GM12878 (cell line): ENCODE measurements at regions of chr12 and their contacts with region 1.

Region 1: DNA sequence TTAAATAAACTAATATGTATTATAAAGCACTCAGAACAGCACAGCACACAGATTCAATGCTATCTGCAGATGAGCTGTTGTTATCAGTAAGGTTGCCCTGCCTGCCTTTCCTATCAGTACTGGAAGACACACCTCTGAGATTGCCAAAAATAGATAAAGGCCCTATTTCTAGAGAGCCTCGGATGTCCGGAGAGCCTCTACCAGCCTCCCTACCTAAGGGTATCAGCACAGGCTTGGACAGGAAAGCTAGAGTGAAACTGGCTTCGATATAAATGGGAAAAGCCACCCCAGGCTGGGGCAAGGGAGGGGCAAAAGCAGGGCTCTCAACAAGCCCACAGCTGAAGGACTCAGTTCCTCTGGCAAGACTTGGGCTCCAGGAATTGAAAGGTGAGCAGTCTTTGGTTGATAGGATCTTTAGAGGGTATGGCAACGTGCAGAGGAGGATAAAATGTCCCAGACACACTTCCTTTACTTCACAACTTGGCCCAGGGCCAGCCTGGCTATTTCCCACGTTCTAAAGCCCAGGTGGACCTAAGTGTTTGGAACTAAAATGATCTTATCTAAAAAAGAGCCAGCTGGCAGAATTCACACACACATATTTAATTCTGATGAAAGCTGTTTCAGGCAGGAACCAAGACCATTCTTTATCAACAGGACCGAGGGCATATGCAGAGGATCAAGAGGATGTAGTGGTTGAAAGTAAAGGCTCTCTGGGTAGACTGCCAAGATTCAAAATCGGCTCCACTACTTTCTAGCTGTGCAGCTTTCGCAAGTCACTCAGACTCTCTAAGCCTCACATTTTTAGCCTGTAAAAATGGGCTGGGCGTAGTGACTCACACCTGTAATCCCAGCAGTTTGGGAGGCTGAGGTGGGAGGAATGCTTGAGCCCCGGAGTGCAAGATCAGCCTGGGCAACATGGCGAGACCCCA is 37.8 kb upstream of the ITPR2 start:
- DNase-seq: peak; percentile 35
- ATAC-seq: peak; percentile 33
- H3K4me3 ChIP-seq: no peak overlapping the region
- H3K27ac ChIP-seq: no peak overlapping the region; the same call in 1 of the 2 replicates
- H3K4me1 ChIP-seq: peaks cover 48% of the 10 kb centered on the region
- H3K27me3 ChIP-seq: no peaks in the 10 kb centered on the region
- CTCF ChIP-seq: no peak
- EP300 ChIP-seq: no peak
- POLR2A ChIP-seq: no peak
- RAD21 ChIP-seq: no peak

Region 2: DNA sequence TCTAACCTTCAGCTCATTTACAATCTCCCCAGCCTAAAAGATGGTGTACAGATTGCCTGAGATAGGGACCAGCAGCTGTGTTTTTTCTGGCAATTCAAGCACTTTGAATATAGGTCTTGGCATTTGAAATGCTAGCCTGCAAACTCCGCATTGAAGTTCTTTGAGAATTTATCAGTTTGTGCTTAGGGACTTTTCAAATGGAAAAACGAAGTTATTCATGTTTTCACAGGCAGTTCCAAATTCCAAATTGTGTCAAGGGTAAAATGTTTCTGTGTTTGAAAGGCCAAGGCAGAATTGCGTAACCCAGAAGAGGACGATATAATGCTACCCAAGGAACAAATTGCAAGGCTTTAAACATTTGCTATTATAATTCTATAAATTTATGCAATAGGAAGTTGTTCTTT is 1081.2 kb before region 1 on chr12:
- CTCF ChIA-PET with region 1: no interaction called
- POLR2A ChIA-PET with region 1: no interaction called
- RAD21 ChIA-PET with region 1: no interaction called
- SMC1A ChIA-PET with region 1: no interaction called
- in situ Hi-C with region 1: no loop called
- intact Hi-C with region 1: no loop called
- DNase-seq: no peak
- ATAC-seq: no peak
- H3K4me3 ChIP-seq: no peak overlapping the region
- H3K27ac ChIP-seq: no peak overlapping the region
- H3K4me1 ChIP-seq: no peaks in the 10 kb centered on the region
- H3K27me3 ChIP-seq: no peaks in the 10 kb centered on the region
- CTCF ChIP-seq: no peak
- EP300 ChIP-seq: no peak
- POLR2A ChIP-seq: no peak
- RAD21 ChIP-seq: no peak

Region 3: DNA sequence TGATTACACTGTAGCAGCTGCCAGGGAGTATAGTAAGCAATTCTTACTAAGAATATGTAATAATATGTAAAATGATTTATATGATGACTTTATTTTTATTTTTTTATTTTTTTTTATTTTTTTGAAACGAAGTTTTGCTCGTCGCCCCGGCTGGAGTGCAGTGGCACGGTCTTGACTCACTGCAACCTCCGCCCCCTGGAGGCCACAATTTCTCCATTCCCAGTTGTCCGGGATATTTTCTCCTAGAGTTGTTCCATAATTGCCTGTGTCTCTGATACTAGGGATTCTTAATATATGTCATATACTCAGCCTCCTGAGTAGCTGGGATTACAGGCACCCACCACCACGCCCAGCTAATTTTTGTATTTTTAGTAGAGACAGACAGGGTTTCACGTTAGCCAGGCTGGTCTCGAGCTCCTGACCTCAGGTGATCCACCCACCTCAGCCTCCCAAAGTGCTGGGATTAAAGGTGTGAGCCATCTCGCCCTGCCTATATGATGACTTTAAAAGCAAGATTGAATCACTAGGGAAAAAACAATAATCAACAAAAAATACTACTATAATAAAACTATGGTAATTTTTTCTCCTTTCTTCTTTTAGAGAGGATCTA is 25.6 kb before region 1 on chr12:
- CTCF ChIA-PET with region 1: interaction called, 10 read pairs
- POLR2A ChIA-PET with region 1: no interaction called
- RAD21 ChIA-PET with region 1: interaction called, 9 read pairs
- SMC1A ChIA-PET with region 1: interaction called, 14 read pairs
- in situ Hi-C with region 1: no loop called
- intact Hi-C with region 1: no loop called
- DNase-seq: no peak
- ATAC-seq: peak; percentile 43; the same call in 2 of the 3 replicates
- H3K4me3 ChIP-seq: no peak overlapping the region
- H3K27ac ChIP-seq: no peak overlapping the region
- H3K4me1 ChIP-seq: peaks cover 10% of the 10 kb centered on the region
- H3K27me3 ChIP-seq: no peaks in the 10 kb centered on the region
- CTCF ChIP-seq: peak; percentile 38 to 59 (median 56)
- EP300 ChIP-seq: no peak
- POLR2A ChIP-seq: no peak
- RAD21 ChIP-seq: peak; percentile 58

Region 4: GRCh38 chr12:26896913-26897312 is 26.2 kb after region 1 on chr12:
- CTCF ChIA-PET with region 1: no interaction called
- POLR2A ChIA-PET with region 1: no interaction called
- RAD21 ChIA-PET with region 1: no interaction called
- SMC1A ChIA-PET with region 1: no interaction called
- in situ Hi-C with region 1: no loop called
- intact Hi-C with region 1: no loop called
- DNase-seq: no peak
- ATAC-seq: no peak
- H3K4me3 ChIP-seq: no peak overlapping the region
- H3K27ac ChIP-seq: no peak overlapping the region
- H3K4me1 ChIP-seq: no peaks in the 10 kb centered on the region
- H3K27me3 ChIP-seq: no peaks in the 10 kb centered on the region
- CTCF ChIP-seq: no peak
- EP300 ChIP-seq: no peak
- POLR2A ChIP-seq: no peak
- RAD21 ChIP-seq: no peak